ENCODE measurements at regions of chr15 and their contacts with region 1.

Region 1: DNA sequence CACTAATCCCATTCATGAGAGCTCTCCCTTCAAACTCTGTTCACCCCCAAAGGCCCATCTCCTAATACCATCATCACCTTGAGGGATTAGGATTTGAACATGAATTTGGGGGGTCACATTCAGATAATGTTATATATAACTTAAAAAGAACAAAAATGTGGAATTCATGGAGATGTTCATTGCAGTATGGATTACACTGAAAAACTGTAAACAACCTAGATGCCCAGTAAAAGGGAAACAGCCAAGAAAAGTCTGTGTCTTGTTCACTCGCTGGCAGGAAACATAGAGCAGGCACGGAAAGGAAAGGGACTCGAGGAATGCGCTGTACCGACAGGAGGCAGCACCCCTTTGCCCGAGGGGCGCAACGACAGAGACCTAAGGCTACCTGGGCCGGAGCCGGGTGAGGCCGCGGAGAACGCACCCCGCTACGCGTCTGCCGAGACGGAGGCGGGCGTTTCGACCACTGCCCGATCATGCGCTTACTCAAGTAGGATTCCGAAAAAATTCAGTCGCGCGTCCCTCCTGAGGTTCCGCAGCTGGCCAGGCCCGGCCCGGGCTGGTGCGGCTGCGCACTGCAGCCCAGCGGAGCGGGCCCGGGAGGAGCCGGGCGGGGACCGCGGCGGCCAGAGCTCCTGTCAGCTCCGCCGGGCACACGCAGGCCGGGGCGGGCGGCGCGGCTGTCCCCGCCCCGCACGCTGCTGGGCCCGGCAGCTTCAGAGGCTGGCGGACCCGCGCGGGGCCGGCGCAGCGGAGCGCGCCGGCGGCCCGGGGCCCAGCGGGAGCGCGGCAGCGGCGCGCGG is 862 bp upstream of the MAN2A2 start:
- DNase-seq: peak; percentile 78
- ATAC-seq: peak; percentile 93
- H3K4me3 ChIP-seq: peak overlapping the region; percentile 56
- H3K27ac ChIP-seq: peak overlapping the region; percentile 71
- H3K4me1 ChIP-seq: peaks cover 4% of the 10 kb centered on the region; the same call in 1 of the 2 replicates
- H3K27me3 ChIP-seq: no peaks in the 10 kb centered on the region
- CTCF ChIP-seq: peak; percentile 61
- POLR2A ChIP-seq: no peak
- RAD21 ChIP-seq: peak; percentile 21; the same call in 1 of the 2 replicates

Region 2: DNA sequence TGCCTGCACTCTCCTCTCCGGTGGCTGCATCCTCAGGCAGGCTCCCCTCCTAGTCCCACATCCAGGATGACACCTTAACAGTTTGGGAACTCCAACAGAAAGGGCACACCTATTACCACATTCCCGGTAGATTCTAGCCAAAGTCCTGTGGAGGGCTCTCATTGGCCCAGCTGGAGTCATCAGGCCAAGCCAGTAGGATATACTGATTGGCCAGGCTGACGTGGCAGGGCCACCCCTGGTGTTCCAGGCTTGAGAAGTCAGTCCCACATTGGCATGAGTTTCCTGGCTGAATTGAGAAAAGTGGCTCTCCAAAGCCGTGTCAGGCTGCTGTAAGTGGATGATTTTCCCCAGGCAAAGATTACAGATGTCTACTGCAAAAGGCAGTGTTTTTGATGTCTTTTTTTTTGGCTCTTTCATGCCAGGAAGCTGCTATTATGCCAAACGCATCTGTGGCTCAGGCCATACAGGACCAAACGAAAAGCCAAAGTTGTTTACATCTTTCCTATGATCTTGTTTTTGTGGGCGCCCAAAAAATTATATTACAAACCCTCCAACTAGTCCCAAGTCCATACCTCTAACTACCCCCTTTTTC is 191.7 kb before region 1 on chr15:
- CTCF ChIA-PET with region 1: no interaction called
- POLR2A ChIA-PET with region 1: no interaction called
- dilution Hi-C with region 1: no loop called
- in situ Hi-C with region 1: no loop called
- intact Hi-C with region 1: no loop called
- DNase-seq: no peak
- ATAC-seq: no peak
- H3K4me3 ChIP-seq: no peak overlapping the region
- H3K27ac ChIP-seq: no peak overlapping the region
- H3K4me1 ChIP-seq: no peaks in the 10 kb centered on the region
- H3K27me3 ChIP-seq: no peaks in the 10 kb centered on the region
- CTCF ChIP-seq: no peak
- POLR2A ChIP-seq: no peak
- RAD21 ChIP-seq: no peak

Region 3: GRCh38 chr15:90934791-90935751 is 32.8 kb after region 1 on chr15 and contains the start of gene UNC45A:
- CTCF ChIA-PET with region 1: interaction called, 8 read pairs
- POLR2A ChIA-PET with region 1: no interaction called
- dilution Hi-C with region 1: no loop called
- in situ Hi-C with region 1: no loop called
- intact Hi-C with region 1: loop called (anchors 2 kb)
- DNase-seq: peak; percentile 77
- ATAC-seq: peak; percentile 89
- H3K4me3 ChIP-seq: peak within 1 kb of the TSS; percentile 76
- H3K27ac ChIP-seq: peak within 1 kb of the TSS; percentile 79
- H3K4me1 ChIP-seq: peaks cover 9% of the 10 kb centered on the region
- H3K27me3 ChIP-seq: no peaks in the 10 kb centered on the region
- CTCF ChIP-seq: no peak
- POLR2A ChIP-seq: 0 out of 2 replicates have a peak, but pooled peaks have one; percentile 62
- RAD21 ChIP-seq: no peak
- total RNA-seq, gene UNC45A: 85.3 and 100 TPM in 2 replicates

Measured in IMR-90 (cell line).